GM12878 (cell line): ENCODE measurements at regions of chr7 and their contacts with region 1.

Region 1: GRCh38 chr7:51311166-51311565 is 5.4 kb downstream of the COBL start:
- DNase-seq: no peak
- ATAC-seq: no peak
- H3K4me3 ChIP-seq: no peak overlapping the region
- H3K27ac ChIP-seq: no peak overlapping the region
- H3K4me1 ChIP-seq: no peaks in the 10 kb centered on the region
- H3K27me3 ChIP-seq: peaks cover 3% of the 10 kb centered on the region in 2 experiments; a peak in 3 of 4 replicates
- CTCF ChIP-seq: no peak
- EP300 ChIP-seq: no peak
- POLR2A ChIP-seq: no peak
- RAD21 ChIP-seq: no peak

Region 2: GRCh38 chr7:51344406-51345138 is 33.4 kb after region 1 on chr7:
- CTCF ChIA-PET with region 1: no interaction called
- POLR2A ChIA-PET with region 1: no interaction called
- RAD21 ChIA-PET with region 1: no interaction called
- SMC1A ChIA-PET with region 1: no interaction called
- in situ Hi-C with region 1: no loop called
- intact Hi-C with region 1: loop called (anchors 1 kb)
- DNase-seq: no peak
- ATAC-seq: no peak
- H3K4me3 ChIP-seq: no peak overlapping the region
- H3K27ac ChIP-seq: no peak overlapping the region
- H3K4me1 ChIP-seq: no peaks in the 10 kb centered on the region
- H3K27me3 ChIP-seq: no peaks in the 10 kb centered on the region
- CTCF ChIP-seq: no peak
- EP300 ChIP-seq: no peak
- POLR2A ChIP-seq: no peak
- RAD21 ChIP-seq: no peak